Activated CD8-positive, alpha-beta T cell treated with anti-CD3 and anti-CD28 coated beads for 36 hours (primary cell): ENCODE measurements at regions of chr15 and their contacts with region 1.

Region 1: GRCh38 chr15:68277603-68278344 is at the start of gene FEM1B:
- DNase-seq: peak; percentile 90
- ATAC-seq: peak; percentile 81
- H3K4me3 Mint-ChIP-seq: peak within 1 kb of the TSS; percentile 93
- H3K27ac Mint-ChIP-seq: peak within 1 kb of the TSS; percentile 98
- H3K4me1 Mint-ChIP-seq: peaks cover 38% of the 10 kb centered on the region
- H3K27me3 Mint-ChIP-seq: no peaks in the 10 kb centered on the region
- CTCF ChIP-seq: no peak
- total RNA-seq, gene FEM1B: 37.1 to 44.4 TPM

Region 2: GRCh38 chr15:68229386-68230156 is 48.2 kb before region 1 on chr15 and contains the start of gene CLN6:
- CTCF ChIA-PET with region 1: interaction called, 17 read pairs
- POLR2A ChIA-PET with region 1: interaction called, 50 read pairs
- intact Hi-C with region 1: no loop called
- DNase-seq: peak; percentile 87
- ATAC-seq: peak; percentile 91
- H3K4me3 Mint-ChIP-seq: peak within 1 kb of the TSS; percentile 85
- H3K27ac Mint-ChIP-seq: peak within 1 kb of the TSS; percentile 87
- H3K4me1 Mint-ChIP-seq: peaks cover 36% of the 10 kb centered on the region
- H3K27me3 Mint-ChIP-seq: no peaks in the 10 kb centered on the region
- CTCF ChIP-seq: no peak
- total RNA-seq, gene CLN6: 43.1 to 47.2 TPM

Region 3: GRCh38 chr15:68292157-68292781 is 14.5 kb after region 1 on chr15:
- CTCF ChIA-PET with region 1: interaction called, 7 read pairs
- POLR2A ChIA-PET with region 1: interaction called, 18 read pairs
- intact Hi-C with region 1: no loop called
- DNase-seq: no peak
- ATAC-seq: peak; percentile 56
- H3K4me3 Mint-ChIP-seq: no peak overlapping the region
- H3K27ac Mint-ChIP-seq: peak overlapping the region; percentile 67
- H3K4me1 Mint-ChIP-seq: peaks cover 62% of the 10 kb centered on the region
- H3K27me3 Mint-ChIP-seq: no peaks in the 10 kb centered on the region
- CTCF ChIP-seq: no peak

Region 4: DNA sequence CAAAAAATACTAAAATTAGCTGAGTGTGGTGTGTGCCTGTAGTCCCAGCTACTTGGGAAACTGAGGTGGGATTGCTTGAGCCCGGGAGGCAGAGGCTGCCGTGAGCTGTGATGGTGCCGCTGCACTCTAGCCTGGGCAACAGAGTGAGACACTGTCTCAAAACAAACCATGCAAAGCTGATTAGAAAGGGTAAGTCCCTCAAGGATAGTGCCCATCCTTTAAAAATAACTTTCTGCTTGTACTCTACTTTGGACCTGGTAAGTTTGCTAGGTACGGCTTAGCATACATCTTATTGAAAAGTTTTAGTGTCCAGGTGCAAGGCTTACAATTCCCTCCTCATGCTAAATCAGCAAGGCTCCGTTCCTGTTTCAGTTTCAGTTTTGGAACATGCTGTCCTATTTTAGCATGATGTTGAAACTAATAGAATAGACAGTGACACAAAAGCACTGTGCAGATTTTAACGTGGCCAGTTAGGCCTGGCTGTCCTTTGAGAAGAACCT is 21.2 kb after region 1 on chr15:
- CTCF ChIA-PET with region 1: interaction called, 6 read pairs
- POLR2A ChIA-PET with region 1: interaction called, 10 read pairs
- intact Hi-C with region 1: no loop called
- DNase-seq: peak; percentile 36
- ATAC-seq: peak; percentile 91
- H3K4me3 Mint-ChIP-seq: peak overlapping the region; percentile 71
- H3K27ac Mint-ChIP-seq: peak overlapping the region; percentile 91
- H3K4me1 Mint-ChIP-seq: peaks cover 32% of the 10 kb centered on the region
- H3K27me3 Mint-ChIP-seq: no peaks in the 10 kb centered on the region
- CTCF ChIP-seq: no peak

Region 5: DNA sequence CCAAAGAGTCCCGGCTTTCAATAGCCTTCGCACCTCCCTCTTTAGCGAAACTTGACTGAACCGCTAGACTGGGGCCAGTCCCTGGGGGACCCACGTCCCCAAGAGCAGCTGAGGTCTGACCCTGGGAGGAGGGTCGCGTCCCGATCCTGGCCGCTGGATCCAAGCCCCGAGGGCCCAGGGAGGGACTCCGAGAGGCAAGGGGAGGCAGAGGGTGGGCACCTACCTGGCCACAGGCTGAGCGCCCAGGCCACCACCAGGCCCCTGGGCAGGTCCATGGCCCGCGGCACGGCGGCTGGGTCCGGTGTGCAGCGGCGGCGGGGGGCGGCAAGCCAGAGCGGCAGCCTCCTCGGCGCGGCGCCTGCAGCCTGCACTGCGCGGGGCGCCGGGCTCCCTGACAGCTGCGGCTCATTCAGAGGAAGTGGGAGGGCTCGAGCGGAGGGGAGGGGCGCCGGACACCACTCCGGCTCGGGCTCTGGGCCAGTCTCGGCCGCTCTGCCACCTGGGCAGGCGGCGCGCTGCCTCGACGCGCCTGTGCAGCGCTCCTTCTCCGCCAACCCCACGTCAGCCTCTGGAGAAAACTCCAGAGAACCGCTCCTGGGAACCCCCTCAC is 154.1 kb after region 1 on chr15 and contains the start of gene ITGA11:
- CTCF ChIA-PET with region 1: no interaction called
- POLR2A ChIA-PET with region 1: no interaction called
- intact Hi-C with region 1: no loop called
- DNase-seq: peak; percentile 6
- ATAC-seq: peak; percentile 24
- H3K4me3 Mint-ChIP-seq: no peak within 1 kb of the TSS
- H3K27ac Mint-ChIP-seq: no peak within 1 kb of the TSS
- H3K4me1 Mint-ChIP-seq: no peaks in the 10 kb centered on the region
- H3K27me3 Mint-ChIP-seq: peaks cover 43% of the 10 kb centered on the region
- CTCF ChIP-seq: no peak
- total RNA-seq, gene ITGA11: 1.7 to 3.6 TPM